ENCODE measurements at regions of chr9 and their contacts with region 1.

Region 1: DNA sequence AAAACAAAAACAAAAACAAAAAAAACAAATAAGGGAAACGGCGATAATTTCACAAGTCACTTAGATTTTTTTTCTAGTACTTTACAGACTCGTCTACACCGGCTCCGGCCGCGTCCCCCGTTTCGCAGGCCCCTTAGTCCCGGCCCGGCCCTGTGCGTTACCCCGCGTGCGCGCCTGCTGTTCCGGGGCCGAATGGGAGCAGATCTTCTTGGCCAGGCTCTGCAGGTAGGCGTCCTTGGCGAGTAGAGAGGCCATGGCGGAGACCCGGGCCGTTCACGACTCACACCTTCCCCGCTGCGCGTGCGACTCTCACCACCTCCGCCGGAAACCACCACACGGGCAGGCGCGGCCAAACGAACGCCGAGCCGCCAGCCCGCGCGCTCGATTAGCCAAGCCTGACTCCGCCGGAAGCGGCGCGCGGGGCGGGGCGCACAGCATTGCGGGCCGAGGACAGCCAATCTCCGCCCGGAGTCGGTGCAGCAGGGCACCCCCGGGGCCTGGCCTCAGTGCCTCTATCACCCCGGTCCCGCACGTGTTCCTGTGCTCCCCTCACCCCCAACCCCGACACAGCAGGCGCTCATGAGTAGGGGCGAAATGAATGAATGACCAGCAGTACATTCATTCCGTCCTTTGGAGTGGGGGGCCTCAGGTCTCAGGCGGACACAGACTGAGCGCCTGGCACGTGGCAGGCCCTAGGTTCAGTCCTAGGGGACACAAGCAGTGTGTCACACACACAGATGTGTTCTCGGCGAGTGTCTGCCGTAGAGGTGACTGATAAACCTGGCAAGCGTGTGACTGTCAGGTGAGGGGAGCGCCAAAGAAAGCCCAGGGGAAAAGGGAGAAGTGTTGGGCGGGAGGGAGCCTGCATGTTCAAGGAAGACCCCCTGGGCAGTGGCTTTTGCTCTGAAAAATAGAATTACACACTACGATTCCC is at the start of gene SURF6:
- DNase-seq: peak; percentile 94
- ATAC-seq: peak; percentile 96
- H3K4me3 Mint-ChIP-seq: peak within 1 kb of the TSS; percentile 95
- H3K27ac Mint-ChIP-seq: peak within 1 kb of the TSS; percentile 96
- H3K4me1 Mint-ChIP-seq: peaks cover 55% of the 10 kb centered on the region
- H3K27me3 Mint-ChIP-seq: no peaks in the 10 kb centered on the region
- total RNA-seq, gene SURF6: 12.9 to 16.5 TPM

Region 2: GRCh38 chr9:133238851-133239532 is 97.2 kb before region 1 on chr9:
- CTCF ChIA-PET with region 1: interaction called, 10 read pairs
- DNase-seq: peak; percentile 71
- ATAC-seq: peak; percentile 84
- H3K4me3 Mint-ChIP-seq: no peak overlapping the region
- H3K27ac Mint-ChIP-seq: no peak overlapping the region
- H3K4me1 Mint-ChIP-seq: peaks cover 6% of the 10 kb centered on the region
- H3K27me3 Mint-ChIP-seq: peaks cover 29% of the 10 kb centered on the region

Region 3: DNA sequence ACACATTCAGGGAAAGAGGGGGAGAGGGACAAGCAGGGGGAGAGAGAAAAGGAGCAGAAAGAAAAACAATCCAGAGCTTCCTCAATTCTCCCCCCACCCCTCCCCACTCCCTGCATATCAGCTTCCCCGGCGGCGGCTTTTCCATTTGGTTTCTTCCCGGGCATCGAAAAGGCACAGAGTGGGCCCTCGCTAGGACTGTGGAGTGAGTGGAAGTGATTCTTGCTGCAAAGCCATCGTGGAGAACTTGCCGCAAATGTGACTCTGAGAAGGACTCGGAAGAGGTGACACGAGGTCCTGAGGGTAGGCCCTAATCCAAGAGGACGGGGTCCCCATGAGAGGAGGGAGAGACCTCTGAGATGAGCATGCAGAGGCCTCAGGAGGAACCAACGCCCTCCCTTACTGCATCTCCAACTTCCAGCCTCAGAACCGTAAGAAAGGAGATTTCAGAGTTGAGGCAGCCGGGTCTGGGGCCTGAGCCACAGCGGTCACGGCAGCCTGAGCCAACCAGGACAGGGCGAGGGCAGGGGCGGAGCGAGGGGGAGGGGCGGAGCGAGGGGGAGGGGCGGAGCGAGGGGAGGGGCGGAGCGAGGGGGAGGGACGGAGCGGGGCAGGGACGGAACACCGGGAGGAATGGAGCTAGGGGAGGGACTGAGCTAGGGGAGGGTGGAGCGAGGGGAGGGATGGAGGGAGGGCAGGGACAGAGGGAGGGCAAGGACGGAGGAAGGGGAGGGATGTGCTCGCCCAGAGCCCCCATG is 423.2 kb after region 1 on chr9:
- CTCF ChIA-PET with region 1: no interaction called
- DNase-seq: peak; percentile 12
- ATAC-seq: no peak
- H3K4me3 Mint-ChIP-seq: no peak overlapping the region
- H3K27ac Mint-ChIP-seq: no peak overlapping the region
- H3K4me1 Mint-ChIP-seq: no peaks in the 10 kb centered on the region
- H3K27me3 Mint-ChIP-seq: peaks cover 2% of the 10 kb centered on the region